ENCODE measurements at regions of chr1 and their contacts with region 1.

Region 1: GRCh38 chr1:9629445-9630201 is 21.9 kb upstream of the PIK3CD start:
- DNase-seq: peak; percentile 76
- H3K4me3 Mint-ChIP-seq: peak overlapping the region; percentile 96
- H3K27ac Mint-ChIP-seq: peak overlapping the region; percentile 96
- H3K4me1 Mint-ChIP-seq: peaks cover 51% of the 10 kb centered on the region
- H3K27me3 Mint-ChIP-seq: no peaks in the 10 kb centered on the region

Region 2: DNA sequence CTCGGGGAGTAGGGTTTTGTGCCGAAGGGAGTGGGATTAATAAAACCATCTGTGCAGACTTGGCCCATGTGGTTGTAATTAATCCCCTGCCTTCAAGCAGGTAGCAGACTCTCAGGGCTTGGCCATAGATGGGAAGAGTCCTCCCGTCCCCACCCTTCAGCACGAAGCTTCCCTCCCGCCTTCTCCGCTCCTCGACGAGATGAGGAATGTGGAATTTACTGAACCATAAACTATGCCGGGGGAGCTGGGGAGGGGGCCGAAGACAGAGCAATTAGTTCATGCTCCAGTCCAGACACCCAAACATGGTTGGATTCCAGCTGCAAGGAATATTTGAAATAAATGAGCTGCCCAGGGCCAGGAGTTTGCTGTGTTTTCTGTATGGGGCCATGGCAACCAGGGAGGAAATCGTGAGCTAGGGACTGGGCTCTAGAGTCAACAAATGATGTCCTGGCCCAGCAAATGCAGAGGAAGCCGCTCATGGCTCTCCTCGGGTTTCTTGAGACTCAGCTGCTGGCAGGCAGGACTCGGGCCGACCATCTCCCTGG is 258.2 kb before region 1 on chr1:
- intact Hi-C with region 1: no loop called
- DNase-seq: no peak
- H3K4me3 Mint-ChIP-seq: no peak overlapping the region
- H3K27ac Mint-ChIP-seq: no peak overlapping the region
- H3K4me1 Mint-ChIP-seq: no peaks in the 10 kb centered on the region
- H3K27me3 Mint-ChIP-seq: no peaks in the 10 kb centered on the region

Region 3: DNA sequence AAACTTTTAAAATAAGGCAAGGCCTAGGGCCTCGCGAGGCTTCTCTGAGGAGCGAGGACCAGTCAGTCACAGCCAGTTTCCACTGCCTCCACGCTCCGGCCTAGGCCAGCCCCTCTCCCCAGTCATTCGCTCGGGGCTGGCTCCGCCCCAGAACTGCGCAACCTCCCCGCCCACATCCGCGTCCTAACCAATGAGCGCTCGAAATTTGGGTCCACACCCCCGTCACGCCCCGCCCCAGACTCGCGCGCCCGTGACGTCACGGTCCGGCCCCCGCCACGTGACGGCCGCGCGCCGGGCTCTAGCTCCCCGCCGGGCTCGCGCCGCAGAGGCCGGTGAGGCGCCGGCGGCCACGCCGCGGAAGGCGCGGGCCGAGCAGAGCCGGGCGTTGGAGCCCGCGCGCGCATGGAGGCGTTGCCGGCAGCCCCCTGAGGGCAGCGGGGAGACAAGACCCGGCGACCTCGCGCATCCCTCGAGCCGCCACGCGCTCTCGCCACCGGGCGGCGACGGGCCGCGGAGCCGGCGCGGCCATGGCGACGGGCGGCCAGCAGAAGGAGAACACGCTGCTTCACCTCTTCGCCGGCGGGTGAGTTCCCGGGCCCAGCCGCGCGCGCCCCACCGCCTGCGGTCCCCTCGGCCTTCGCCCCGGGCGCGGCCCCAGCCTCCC is 90.3 kb before region 1 on chr1 and contains the start of gene SLC25A33:
- intact Hi-C with region 1: no loop called
- DNase-seq: peak; percentile 97
- H3K4me3 Mint-ChIP-seq: peak within 1 kb of the TSS; percentile 92
- H3K27ac Mint-ChIP-seq: peak within 1 kb of the TSS; percentile 84
- H3K4me1 Mint-ChIP-seq: peaks cover 28% of the 10 kb centered on the region
- H3K27me3 Mint-ChIP-seq: no peaks in the 10 kb centered on the region
- total RNA-seq, gene SLC25A33: 9.6 and 10.4 TPM in 2 replicates

Region 4: DNA sequence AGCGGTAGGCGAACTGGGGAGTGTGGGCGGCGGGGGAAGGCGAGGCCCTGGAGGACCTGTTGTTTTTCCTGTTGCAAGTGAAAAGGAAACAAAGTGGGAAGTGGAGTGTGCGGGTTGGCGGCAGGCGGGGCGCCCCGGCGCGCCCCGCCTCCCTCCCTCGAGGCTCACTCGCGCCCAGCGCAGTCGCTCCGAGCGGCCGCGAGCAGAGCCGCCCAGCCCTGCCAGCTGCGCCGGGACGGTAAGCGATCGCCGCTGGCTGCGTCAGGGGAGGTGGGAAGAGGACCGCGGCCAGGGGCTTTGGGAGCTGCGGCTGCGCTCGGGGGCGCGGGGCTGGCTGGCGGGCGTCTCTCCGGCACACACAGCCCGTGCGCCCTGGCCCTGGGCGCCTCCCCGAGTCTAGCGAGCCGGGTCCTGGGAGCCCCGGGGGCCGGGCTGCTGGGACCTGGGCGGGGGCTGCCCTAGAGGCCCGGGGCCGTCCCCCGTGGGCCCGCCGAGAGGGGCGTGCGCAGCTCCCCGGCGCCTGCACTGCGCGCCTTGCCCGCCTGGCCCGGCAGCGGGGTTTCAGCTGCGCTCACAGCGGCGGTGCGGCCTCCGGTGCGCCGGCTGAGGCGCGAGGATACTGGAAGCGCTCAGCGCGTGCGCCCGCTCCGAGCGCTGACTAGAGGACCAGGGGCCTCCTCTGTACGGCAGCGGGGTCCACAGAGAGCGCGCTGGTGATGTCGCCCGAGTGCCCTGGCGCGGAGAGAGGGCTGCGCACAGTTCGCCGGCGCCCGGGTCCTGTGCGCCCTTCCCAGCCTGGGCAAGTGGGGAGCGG is 22.1 kb after region 1 on chr1 and contains the start of gene PIK3CD:
- intact Hi-C with region 1: loop called (anchors 1 kb)
- DNase-seq: peak; percentile 25
- H3K4me3 Mint-ChIP-seq: peak within 1 kb of the TSS; percentile 96
- H3K27ac Mint-ChIP-seq: peak within 1 kb of the TSS; percentile 92
- H3K4me1 Mint-ChIP-seq: peaks cover 47% of the 10 kb centered on the region
- H3K27me3 Mint-ChIP-seq: no peaks in the 10 kb centered on the region
- total RNA-seq, gene PIK3CD: 184 and 189 TPM in 2 replicates

Region 5: GRCh38 chr1:9689011-9689706 is 59.5 kb after region 1 on chr1:
- intact Hi-C with region 1: loop called (anchors 2 kb)
- DNase-seq: peak; percentile 74
- H3K4me3 Mint-ChIP-seq: peak overlapping the region; percentile 65
- H3K27ac Mint-ChIP-seq: no peak overlapping the region
- H3K4me1 Mint-ChIP-seq: peaks cover 57% of the 10 kb centered on the region
- H3K27me3 Mint-ChIP-seq: no peaks in the 10 kb centered on the region

Region 6: GRCh38 chr1:9705337-9706093 is 75.9 kb after region 1 on chr1:
- intact Hi-C with region 1: no loop called
- DNase-seq: no peak
- H3K4me3 Mint-ChIP-seq: no peak overlapping the region
- H3K27ac Mint-ChIP-seq: peak overlapping the region; percentile 50
- H3K4me1 Mint-ChIP-seq: peaks cover 40% of the 10 kb centered on the region
- H3K27me3 Mint-ChIP-seq: no peaks in the 10 kb centered on the region

Region 7: DNA sequence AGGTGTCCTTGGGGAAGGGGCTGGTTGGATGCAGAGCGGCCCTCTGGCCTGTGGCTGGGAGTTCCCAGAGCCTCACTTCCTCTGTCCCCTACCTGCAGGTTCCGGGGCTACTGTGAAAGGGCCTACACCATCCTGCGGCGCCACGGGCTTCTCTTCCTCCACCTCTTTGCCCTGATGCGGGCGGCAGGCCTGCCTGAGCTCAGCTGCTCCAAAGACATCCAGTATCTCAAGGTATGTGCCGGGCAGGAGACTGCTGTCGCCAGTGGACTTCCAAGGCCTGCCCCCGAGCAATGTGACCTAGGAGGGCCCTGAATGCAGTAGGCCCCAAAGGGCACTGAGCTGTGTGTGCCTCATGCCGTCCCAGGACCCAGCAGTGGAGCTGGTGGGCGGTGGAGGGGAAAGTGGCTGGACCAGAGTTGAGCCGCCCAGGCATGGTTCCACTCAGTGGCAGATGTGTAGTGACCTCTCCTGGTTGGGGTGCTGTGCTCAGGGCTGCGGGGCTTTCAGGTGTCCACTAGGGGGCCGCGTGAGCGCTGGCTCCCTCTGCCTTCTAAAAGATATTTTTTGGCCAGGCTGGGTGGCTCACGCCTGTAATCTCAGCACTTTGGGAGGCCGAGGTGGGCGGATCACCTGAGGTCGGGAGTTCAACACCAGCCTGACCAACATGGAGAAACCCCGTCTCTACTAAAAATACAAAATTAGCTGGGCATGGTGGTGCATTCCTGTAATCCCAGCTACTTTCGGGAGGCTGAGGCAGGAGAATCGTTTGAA is 95.3 kb after region 1 on chr1:
- intact Hi-C with region 1: loop called (anchors 1 kb)
- DNase-seq: peak; percentile 58
- H3K4me3 Mint-ChIP-seq: no peak overlapping the region
- H3K27ac Mint-ChIP-seq: peak overlapping the region; percentile 62
- H3K4me1 Mint-ChIP-seq: peaks cover 32% of the 10 kb centered on the region
- H3K27me3 Mint-ChIP-seq: no peaks in the 10 kb centered on the region

Region 8: DNA sequence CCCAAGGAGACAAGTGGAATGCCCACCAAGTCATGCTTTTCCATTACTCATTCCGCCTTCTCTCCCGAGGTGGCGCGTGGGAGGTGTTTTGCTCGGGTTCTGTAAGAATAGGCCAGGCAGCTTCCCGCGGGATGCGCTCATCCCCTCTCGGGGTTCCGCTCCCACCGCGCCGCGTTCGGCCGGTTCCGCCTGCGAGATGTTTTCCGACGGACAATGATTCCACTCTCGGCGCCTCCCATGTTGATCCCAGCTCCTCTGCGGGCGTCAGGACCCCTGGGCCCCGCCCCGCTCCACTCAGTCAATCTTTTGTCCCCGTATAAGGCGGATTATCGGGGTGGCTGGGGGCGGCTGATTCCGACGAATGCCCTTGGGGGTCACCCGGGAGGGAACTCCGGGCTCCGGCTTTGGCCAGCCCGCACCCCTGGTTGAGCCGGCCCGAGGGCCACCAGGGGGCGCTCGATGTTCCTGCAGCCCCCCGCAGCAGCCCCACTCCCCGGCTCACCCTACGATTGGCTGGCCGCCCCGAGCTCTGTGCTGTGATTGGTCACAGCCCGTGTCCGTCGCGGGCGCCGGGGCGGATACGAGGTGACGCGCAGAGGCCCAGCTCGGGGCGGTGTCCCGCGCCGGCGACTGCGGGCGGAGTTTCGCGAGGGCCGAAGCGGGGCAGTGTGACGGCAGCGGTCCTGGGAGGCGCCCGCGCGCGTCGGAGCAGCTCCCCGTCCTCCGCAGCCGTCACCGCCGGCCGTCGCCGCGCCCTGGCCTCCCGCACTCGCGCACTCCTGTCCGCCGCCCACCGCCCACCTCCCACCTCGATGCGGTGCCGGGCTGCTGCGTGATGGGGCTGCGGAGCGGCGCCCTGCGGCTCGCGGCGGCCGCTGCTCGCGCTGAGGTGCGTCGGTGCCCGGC is 580.5 kb after region 1 on chr1 and contains the start of gene KIF1B:
- intact Hi-C with region 1: loop called (anchors 10 kb)
- DNase-seq: peak; percentile 95
- H3K4me3 Mint-ChIP-seq: peak within 1 kb of the TSS; percentile 89
- H3K27ac Mint-ChIP-seq: peak within 1 kb of the TSS; percentile 84
- H3K4me1 Mint-ChIP-seq: peaks cover 33% of the 10 kb centered on the region
- H3K27me3 Mint-ChIP-seq: peaks cover 4% of the 10 kb centered on the region
- total RNA-seq, gene KIF1B: 21.9 and 23.8 TPM in 2 replicates